ENCODE measurements at regions of chr12 and their contacts with region 1.

Region 1: DNA sequence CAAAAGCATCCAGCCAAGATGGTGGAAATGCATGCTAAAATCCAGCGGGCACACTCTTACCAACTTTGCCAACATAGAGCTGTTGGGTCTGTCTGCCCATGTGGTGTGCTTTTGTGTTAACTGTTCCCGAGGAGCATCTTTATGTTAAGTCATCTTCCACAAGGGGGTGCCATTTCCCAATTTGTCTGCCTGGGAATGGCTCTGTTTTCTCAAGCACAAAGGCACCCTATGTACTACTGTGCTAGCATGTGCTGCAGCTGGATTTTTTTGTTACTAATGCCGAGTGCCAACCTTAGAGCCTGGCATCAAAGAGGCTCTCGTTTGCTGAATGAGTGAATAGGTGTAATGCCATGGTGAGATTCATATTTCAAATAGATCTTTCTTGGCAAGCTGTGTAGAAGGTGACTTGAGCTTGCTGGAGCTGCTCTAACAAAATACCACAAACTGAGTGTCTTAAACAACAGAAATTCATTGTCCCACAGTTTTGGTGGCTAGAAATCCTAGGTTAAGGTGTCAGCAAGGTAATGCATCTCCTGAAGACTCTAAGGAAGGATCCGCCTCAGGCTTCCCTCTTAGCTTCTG is 74.3 kb downstream of the TRHDE start:
- DNase-seq: peak; percentile 86
- H3K4me3 Mint-ChIP-seq: no peak overlapping the region
- H3K27ac Mint-ChIP-seq: no peak overlapping the region
- H3K4me1 Mint-ChIP-seq: peaks cover 8% of the 10 kb centered on the region
- H3K27me3 Mint-ChIP-seq: no peaks in the 10 kb centered on the region
- CTCF ChIP-seq: peak; percentile 45

Region 2: GRCh38 chr12:72191761-72192160 is 154.7 kb before region 1 on chr12:
- CTCF ChIA-PET with region 1: no interaction called
- intact Hi-C with region 1: no loop called
- DNase-seq: no peak
- H3K4me3 Mint-ChIP-seq: no peak overlapping the region
- H3K27ac Mint-ChIP-seq: no peak overlapping the region
- H3K4me1 Mint-ChIP-seq: no peaks in the 10 kb centered on the region
- H3K27me3 Mint-ChIP-seq: no peaks in the 10 kb centered on the region
- CTCF ChIP-seq: no peak

Region 3: DNA sequence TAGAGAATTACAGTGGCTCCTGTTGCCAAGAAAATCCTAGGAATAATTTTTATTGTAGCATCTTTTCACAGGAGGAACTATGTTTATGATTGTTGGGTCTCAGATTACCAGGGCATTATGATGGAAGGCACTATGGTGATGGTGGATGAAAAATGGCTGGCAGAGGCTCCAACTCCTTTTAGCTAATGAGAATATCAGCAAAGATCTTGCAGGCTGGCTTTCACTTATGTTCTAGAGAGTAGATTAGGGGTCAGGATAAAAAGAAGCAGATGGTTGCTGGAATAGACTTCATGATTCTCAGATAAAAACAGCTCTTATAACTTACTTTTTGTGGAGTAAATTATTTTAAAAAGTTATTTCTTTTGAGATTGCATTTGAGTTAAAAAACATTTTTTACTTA is 427.6 kb after region 1 on chr12:
- CTCF ChIA-PET with region 1: no interaction called
- intact Hi-C with region 1: loop called (anchors 5 kb)
- DNase-seq: no peak
- H3K4me3 Mint-ChIP-seq: no peak overlapping the region
- H3K27ac Mint-ChIP-seq: no peak overlapping the region
- H3K4me1 Mint-ChIP-seq: no peaks in the 10 kb centered on the region
- H3K27me3 Mint-ChIP-seq: no peaks in the 10 kb centered on the region
- CTCF ChIP-seq: no peak